Calu3 (cell line): ENCODE measurements at regions of chr17 and their contacts with region 1.

Region 1: GRCh38 chr17:32960506-32961214 is 31.0 kb upstream of the SPACA3 start:
- DNase-seq: no peak
- H3K4me3 Mint-ChIP-seq: no peak overlapping the region
- H3K27ac Mint-ChIP-seq: no peak overlapping the region
- H3K4me1 Mint-ChIP-seq: no peaks in the 10 kb centered on the region
- H3K27me3 Mint-ChIP-seq: peaks cover 34% of the 10 kb centered on the region
- CTCF ChIP-seq: no peak

Region 2: GRCh38 chr17:32976605-32977004 is 15.9 kb after region 1 on chr17:
- CTCF ChIA-PET with region 1: no interaction called
- intact Hi-C with region 1: no loop called
- DNase-seq: no peak
- H3K4me3 Mint-ChIP-seq: no peak overlapping the region
- H3K27ac Mint-ChIP-seq: no peak overlapping the region
- H3K4me1 Mint-ChIP-seq: no peaks in the 10 kb centered on the region
- H3K27me3 Mint-ChIP-seq: peaks cover 29% of the 10 kb centered on the region
- CTCF ChIP-seq: no peak

Region 3: DNA sequence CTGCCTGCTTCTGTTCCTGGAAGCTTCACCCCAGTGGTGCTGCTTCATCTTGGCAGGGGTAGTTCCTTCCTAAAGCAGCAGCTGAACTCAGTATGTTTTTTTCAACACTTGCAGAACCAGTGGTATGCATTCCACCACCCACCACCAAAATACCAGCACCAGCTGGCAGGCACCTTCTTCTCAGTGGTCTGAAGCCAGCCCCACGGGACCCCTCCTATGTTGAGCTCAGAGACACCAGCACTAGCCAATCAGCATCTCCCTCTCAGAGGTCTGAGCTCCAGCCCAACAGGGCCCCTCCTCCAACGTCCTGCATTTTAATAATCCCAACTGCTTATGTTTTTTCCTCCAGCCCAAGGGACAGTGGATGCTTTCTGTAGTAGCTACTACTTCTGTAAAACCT is 994.8 kb after region 1 on chr17:
- CTCF ChIA-PET with region 1: interaction called, 11 read pairs
- intact Hi-C with region 1: no loop called
- DNase-seq: no peak
- H3K4me3 Mint-ChIP-seq: no peak overlapping the region
- H3K27ac Mint-ChIP-seq: no peak overlapping the region
- H3K4me1 Mint-ChIP-seq: no peaks in the 10 kb centered on the region
- H3K27me3 Mint-ChIP-seq: peaks cover 13% of the 10 kb centered on the region
- CTCF ChIP-seq: no peak